ENCODE measurements at regions of chrX and their contacts with region 1.

Region 1: GRCh38 chrX:19799319-19800182 is 87.8 kb downstream of the SH3KBP1 start:
- DNase-seq: peak; percentile 27
- H3K4me3 Mint-ChIP-seq: peak overlapping the region; percentile 88
- H3K27ac Mint-ChIP-seq: peak overlapping the region; percentile 95
- H3K4me1 Mint-ChIP-seq: peaks cover 77% of the 10 kb centered on the region
- H3K27me3 Mint-ChIP-seq: no peaks in the 10 kb centered on the region

Region 2: GRCh38 chrX:19747652-19748610 is 51.6 kb before region 1 on chrX:
- intact Hi-C with region 1: loop called (anchors 2 kb)
- DNase-seq: peak; percentile 72
- H3K4me3 Mint-ChIP-seq: peak overlapping the region; percentile 67
- H3K27ac Mint-ChIP-seq: peak overlapping the region; percentile 93
- H3K4me1 Mint-ChIP-seq: peaks cover 91% of the 10 kb centered on the region
- H3K27me3 Mint-ChIP-seq: no peaks in the 10 kb centered on the region

Region 3: GRCh38 chrX:19840899-19841648 is 41.5 kb after region 1 on chrX:
- intact Hi-C with region 1: loop called (anchors 2 kb)
- DNase-seq: peak; percentile 37
- H3K4me3 Mint-ChIP-seq: peak overlapping the region; percentile 41
- H3K27ac Mint-ChIP-seq: peak overlapping the region; percentile 85
- H3K4me1 Mint-ChIP-seq: peaks cover 41% of the 10 kb centered on the region
- H3K27me3 Mint-ChIP-seq: no peaks in the 10 kb centered on the region

Region 4: DNA sequence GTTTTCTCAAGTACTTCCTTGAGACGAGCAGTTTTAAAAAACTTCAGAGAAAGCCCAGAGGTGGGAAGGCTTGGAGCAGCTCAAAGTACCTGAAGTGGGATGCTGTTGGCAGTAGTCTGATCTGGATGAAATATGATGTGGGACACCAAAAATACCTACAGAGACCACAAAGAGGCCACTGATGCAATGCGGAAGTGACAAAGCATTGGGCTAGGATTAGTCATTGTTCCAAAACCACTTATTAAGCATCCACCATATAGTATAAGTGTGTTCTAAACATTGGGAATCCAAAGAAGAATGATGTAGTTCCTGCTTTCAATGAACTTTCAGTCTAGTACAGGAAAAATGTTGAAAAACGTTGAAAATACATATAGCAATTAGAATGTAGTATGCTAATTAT is 1188.6 kb after region 1 on chrX:
- intact Hi-C with region 1: no loop called
- DNase-seq: no peak
- H3K4me3 Mint-ChIP-seq: no peak overlapping the region
- H3K27ac Mint-ChIP-seq: no peak overlapping the region
- H3K4me1 Mint-ChIP-seq: no peaks in the 10 kb centered on the region
- H3K27me3 Mint-ChIP-seq: no peaks in the 10 kb centered on the region